Ovary (tissue), 10 donors: ENCODE measurements at regions of chr7 and their contacts with region 1.

Region 1: DNA sequence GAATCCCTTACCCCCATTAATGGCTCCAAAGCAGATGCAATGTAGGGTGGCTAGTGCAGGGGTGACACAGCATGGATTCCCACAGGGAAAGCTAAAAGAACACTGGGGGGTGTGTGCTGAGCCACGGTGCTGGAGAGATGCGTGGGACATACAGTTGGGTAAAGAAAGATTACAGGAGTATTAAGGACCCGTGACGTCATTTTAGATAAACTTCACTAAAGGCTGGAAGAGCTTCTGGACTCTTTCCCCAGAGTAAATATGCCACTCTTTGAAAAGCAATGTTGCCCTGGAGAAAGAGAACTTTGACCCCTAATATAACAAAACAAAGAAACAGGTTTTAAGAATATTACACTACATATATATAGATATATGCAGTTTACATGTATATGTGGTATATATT is 481.5 kb upstream of the VSTM2A start:
- DNase-seq: no peak
- H3K4me3 ChIP-seq: no peak overlapping the region
- H3K27ac ChIP-seq: no peak overlapping the region
- H3K4me1 ChIP-seq: no peaks in the 10 kb centered on the region
- H3K27me3 ChIP-seq: no peaks in the 10 kb centered on the region
- CTCF ChIP-seq: no peak
- EP300 ChIP-seq: no peak
- POLR2A ChIP-seq: no peak

Region 2: GRCh38 chr7:53984776-53985175 is 75.9 kb before region 1 on chr7:
- intact Hi-C with region 1: loop called in 1 of 4 experiments (anchors 2 kb)
- DNase-seq: no peak
- H3K4me3 ChIP-seq: no peak overlapping the region
- H3K27ac ChIP-seq: no peak overlapping the region
- H3K4me1 ChIP-seq: no peaks in the 10 kb centered on the region
- H3K27me3 ChIP-seq: no peaks in the 10 kb centered on the region
- CTCF ChIP-seq: no peak
- EP300 ChIP-seq: no peak
- POLR2A ChIP-seq: no peak